ENCODE measurements at regions of chr2 and their contacts with region 1.

Region 1: DNA sequence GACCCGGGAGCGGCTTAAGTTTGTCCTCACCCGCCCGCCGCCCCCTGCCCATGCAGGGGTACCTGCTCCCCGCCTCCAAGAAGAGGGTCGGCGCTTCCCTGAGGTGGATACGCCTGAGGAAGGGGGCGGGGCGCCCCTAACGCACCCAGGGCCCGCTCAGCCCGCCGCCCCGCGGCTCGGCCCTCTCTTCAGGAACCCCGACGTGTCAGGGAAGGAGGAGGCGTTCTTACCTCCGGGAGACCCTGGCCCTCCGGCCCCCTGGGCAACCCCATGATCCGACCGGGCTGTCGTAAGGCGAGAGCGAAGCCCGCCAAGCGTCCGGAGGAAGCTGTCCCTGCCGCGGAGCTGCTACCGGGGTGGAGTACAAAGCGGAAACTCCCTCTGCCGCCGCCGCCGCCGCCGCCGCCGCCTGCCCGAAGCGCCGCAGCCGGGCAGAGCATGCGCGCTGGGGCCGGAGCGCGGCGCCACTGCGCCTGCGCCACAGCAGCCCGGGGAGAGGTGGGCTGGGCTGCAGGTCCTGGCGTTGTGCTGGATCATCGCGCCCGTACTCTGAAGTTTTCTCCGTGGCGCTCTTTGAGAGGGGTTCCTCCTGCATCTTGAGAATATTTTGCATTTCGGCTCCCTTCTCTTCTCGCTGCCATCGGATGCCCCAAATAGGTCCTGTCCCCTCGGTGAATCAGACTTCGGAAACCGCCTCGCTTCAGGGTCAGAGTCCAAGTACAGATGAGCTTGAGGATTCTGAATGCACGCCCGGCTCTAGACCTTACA is at the start of gene CCDC93:
- DNase-seq: peak; percentile 73 to 96 (median 84)
- ATAC-seq: peak; percentile 83
- H3K4me3 ChIP-seq: peak within 1 kb of the TSS; percentile 89
- H3K4me3 Mint-ChIP-seq: peak within 1 kb of the TSS; percentile 92
- H3K27ac ChIP-seq: peak within 1 kb of the TSS; percentile 92 to 95
- H3K27ac Mint-ChIP-seq: peak within 1 kb of the TSS; percentile 86
- H3K4me1 ChIP-seq: peaks cover 33% of the 10 kb centered on the region
- H3K4me1 Mint-ChIP-seq: peaks cover 44% of the 10 kb centered on the region
- H3K27me3 ChIP-seq: no peaks in the 10 kb centered on the region
- H3K27me3 Mint-ChIP-seq: no peaks in the 10 kb centered on the region
- CTCF ChIP-seq: no peak
- total RNA-seq, gene CCDC93: 62.2 to 64.5 TPM

Region 2: DNA sequence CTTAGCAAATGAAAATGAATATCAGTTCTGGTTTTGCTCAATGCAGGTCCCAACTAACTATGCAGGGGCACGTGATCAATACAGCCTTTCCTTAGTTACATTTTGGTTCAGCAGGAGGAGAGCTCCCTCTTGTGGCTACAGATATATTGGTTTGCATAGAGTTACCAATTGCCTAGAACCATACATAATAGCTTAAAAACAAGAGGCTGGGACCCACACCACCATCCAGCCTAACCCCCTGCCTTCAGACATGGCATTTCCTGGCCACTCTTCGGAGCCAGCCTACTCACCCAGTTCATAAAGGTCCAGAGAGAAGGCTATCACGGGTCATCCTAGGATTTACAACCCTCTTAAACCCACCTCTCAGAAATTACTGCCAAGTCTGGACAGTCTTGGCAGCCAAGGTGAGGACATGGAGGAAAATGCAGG is 10.5 kb before region 1 on chr2:
- CTCF ChIA-PET with region 1: interaction called, 44 read pairs
- POLR2A ChIA-PET with region 1: interaction called, 19 read pairs
- intact Hi-C with region 1: no loop called
- DNase-seq: peak in 11 of 14 experiments; percentile 2 to 86 (median 34)
- ATAC-seq: peak; percentile 97
- H3K4me3 ChIP-seq: no peak overlapping the region
- H3K4me3 Mint-ChIP-seq: no peak overlapping the region
- H3K27ac ChIP-seq: no peak overlapping the region
- H3K27ac Mint-ChIP-seq: peak overlapping the region; percentile 7
- H3K4me1 ChIP-seq: peaks cover 10% of the 10 kb centered on the region
- H3K4me1 Mint-ChIP-seq: peaks cover 17% of the 10 kb centered on the region
- H3K27me3 ChIP-seq: no peaks in the 10 kb centered on the region
- H3K27me3 Mint-ChIP-seq: no peaks in the 10 kb centered on the region
- CTCF ChIP-seq: peak; percentile 90

Region 3: DNA sequence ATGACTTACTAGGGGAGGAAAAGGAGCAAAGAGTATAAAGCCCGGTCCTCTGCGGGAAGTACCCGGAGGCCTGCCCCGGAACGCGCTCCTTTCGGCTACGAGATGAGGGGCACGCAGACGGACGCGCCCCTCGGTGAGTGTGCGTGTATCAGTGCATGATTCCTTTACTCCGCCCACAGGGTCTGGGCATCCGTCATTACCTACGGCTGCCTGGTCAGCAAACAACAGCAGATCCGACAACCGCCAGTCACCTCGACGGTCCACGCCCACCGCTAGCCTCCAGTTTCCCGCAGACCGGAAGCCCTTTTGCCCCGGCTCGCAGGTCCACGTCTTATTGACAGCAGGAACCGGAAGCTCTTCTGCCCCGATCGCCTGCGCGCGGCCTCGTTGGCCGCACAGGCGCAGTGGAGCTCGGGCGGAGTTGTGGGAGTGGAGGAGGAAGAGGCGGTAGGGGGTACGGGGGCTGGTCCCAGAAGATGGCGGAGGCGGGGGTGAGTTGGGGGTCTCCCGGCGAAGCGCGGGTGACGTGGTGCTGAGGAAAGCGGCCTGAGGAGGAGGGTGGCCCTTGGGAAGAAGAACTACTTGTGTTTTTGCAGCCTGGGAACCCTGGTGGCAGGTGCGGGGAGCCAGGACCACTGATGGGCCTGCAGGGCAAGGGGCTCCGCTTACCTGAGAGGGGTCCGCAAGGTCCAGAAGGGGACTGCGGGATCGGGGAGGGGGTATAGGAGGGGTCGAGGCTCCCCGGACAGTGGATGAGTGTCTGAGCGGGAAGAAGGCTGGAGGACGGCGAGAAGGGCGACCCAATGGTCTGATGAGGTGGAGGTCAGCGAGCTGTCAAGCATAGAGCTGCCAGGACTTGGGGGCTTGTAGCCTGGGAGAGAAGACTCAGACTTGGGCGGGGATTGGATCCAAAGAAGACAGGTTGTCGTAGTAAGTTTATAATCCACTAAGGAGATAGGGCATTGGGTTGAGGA is 74.4 kb after region 1 on chr2 and contains the start of gene INSIG2:
- CTCF ChIA-PET with region 1: no interaction called
- POLR2A ChIA-PET with region 1: interaction called, 3 read pairs
- intact Hi-C with region 1: loop called in 1 of 2 experiments (anchors 2 kb)
- DNase-seq: peak; percentile 71 to 95 (median 81)
- ATAC-seq: peak; percentile 88
- H3K4me3 ChIP-seq: peak within 1 kb of the TSS; percentile 91
- H3K4me3 Mint-ChIP-seq: peak within 1 kb of the TSS; percentile 97
- H3K27ac ChIP-seq: peak within 1 kb of the TSS; percentile 58 to 61
- H3K27ac Mint-ChIP-seq: peak within 1 kb of the TSS; percentile 88
- H3K4me1 ChIP-seq: peaks cover 10% of the 10 kb centered on the region
- H3K4me1 Mint-ChIP-seq: peaks cover 38% of the 10 kb centered on the region
- H3K27me3 ChIP-seq: no peaks in the 10 kb centered on the region
- H3K27me3 Mint-ChIP-seq: no peaks in the 10 kb centered on the region
- CTCF ChIP-seq: no peak
- total RNA-seq, gene INSIG2: 7.3 to 7.7 TPM

Region 4: GRCh38 chr2:118186110-118186857 is 172.4 kb after region 1 on chr2:
- CTCF ChIA-PET with region 1: no interaction called
- POLR2A ChIA-PET with region 1: interaction called, 5 read pairs
- intact Hi-C with region 1: loop called (anchors 5 to 10 kb)
- DNase-seq: peak; percentile 70 to 96 (median 86)
- ATAC-seq: peak; percentile 94
- H3K4me3 ChIP-seq: peak overlapping the region; percentile 76
- H3K4me3 Mint-ChIP-seq: peak overlapping the region; percentile 96
- H3K27ac ChIP-seq: peak overlapping the region; percentile 69 to 71
- H3K27ac Mint-ChIP-seq: peak overlapping the region; percentile 87
- H3K4me1 ChIP-seq: peaks cover 18% of the 10 kb centered on the region
- H3K4me1 Mint-ChIP-seq: peaks cover 16% of the 10 kb centered on the region
- H3K27me3 ChIP-seq: no peaks in the 10 kb centered on the region
- H3K27me3 Mint-ChIP-seq: no peaks in the 10 kb centered on the region
- CTCF ChIP-seq: no peak

Region 5: DNA sequence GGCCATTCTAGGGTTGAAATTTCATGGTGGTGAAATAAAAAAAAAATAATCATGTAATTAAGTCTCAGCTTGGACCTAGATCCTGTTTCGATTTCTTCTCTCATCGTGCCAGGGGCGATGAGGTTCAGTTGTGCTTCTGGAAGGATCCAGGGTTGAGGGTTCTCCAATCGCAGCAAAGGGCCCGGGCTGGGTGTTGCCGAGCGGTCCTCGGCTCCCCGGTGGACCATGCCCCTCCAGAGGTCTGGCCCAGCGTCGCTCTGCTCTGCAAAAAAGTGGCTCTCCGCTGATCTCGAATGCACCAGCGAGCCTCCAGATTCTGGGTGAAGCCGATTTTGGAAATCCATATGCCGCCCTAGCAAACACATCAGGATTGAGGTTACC is 794.5 kb after region 1 on chr2:
- CTCF ChIA-PET with region 1: no interaction called
- POLR2A ChIA-PET with region 1: no interaction called
- intact Hi-C with region 1: no loop called
- DNase-seq: no peak
- ATAC-seq: no peak
- H3K4me3 ChIP-seq: peak overlapping the region; percentile 3
- H3K4me3 Mint-ChIP-seq: no peak overlapping the region
- H3K27ac ChIP-seq: no peak overlapping the region
- H3K27ac Mint-ChIP-seq: no peak overlapping the region
- H3K4me1 ChIP-seq: peaks cover 4% of the 10 kb centered on the region
- H3K4me1 Mint-ChIP-seq: peaks cover 5% of the 10 kb centered on the region
- H3K27me3 ChIP-seq: peaks cover 43 to 60% of the 10 kb centered on the region in 2 experiments
- H3K27me3 Mint-ChIP-seq: peaks cover 86% of the 10 kb centered on the region
- CTCF ChIP-seq: no peak

Measured in CD4-positive, alpha-beta T cell (primary cell).